Left ventricle myocardium inferior (tissue), 1 donor: ENCODE measurements at regions of chr21 and their contacts with region 1.

Region 1: DNA sequence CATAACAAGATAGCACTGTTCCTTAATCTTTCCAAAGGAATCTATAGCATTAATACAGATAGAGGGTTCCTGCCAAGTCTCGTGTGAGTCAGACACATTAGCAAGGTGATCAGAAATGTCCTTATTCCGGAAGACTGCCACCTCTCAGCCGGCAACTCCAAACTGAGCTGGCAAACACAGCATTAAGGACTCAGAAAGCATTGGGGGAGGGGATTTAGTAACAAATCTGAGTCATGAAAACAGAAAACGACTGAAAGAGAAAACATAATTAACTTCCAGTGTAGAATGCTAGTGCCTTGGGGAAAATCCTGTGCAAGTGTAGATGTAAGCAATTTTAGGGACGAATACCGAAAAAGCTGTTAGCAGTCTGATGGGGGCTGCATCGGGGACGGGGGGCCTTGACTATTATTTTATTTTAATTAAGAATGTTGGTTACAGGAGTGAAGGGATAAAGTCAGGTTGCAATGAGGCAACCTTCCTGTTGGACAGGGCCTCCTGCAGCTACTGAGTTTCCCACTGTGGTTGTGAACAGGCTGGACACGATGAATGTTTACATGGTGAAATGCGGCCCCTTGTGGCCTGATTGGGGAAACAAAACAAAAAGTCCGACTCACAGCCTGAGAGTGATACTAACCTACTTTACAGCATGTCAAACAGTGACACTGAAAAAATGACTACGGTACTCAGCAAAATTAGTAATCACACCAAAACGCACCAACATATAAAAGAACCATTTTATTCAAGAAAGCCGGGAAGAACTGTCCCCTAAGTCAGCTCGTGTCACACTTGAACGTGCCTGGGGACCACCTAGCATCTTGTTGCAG is 20.7 kb downstream of the MIS18A start:
- DNase-seq: peak; percentile 58
- H3K4me3 ChIP-seq: no peak overlapping the region
- H3K27ac ChIP-seq: no peak overlapping the region
- H3K4me1 ChIP-seq: peaks cover 29% of the 10 kb centered on the region
- H3K27me3 ChIP-seq: no peaks in the 10 kb centered on the region
- CTCF ChIP-seq: peak; percentile 76

Region 2: GRCh38 chr21:31426235-31426797 is 831.9 kb before region 1 on chr21:
- intact Hi-C with region 1: no loop called
- DNase-seq: no peak
- H3K4me3 ChIP-seq: no peak overlapping the region
- H3K27ac ChIP-seq: no peak overlapping the region
- H3K4me1 ChIP-seq: no peaks in the 10 kb centered on the region
- H3K27me3 ChIP-seq: peaks cover 3% of the 10 kb centered on the region
- CTCF ChIP-seq: no peak

Region 3: GRCh38 chr21:31781737-31782136 is 476.4 kb before region 1 on chr21:
- intact Hi-C with region 1: loop called (anchors 10 kb)
- DNase-seq: peak; percentile 33
- H3K4me3 ChIP-seq: no peak overlapping the region
- H3K27ac ChIP-seq: no peak overlapping the region
- H3K4me1 ChIP-seq: no peaks in the 10 kb centered on the region
- H3K27me3 ChIP-seq: no peaks in the 10 kb centered on the region
- CTCF ChIP-seq: no peak

Region 4: DNA sequence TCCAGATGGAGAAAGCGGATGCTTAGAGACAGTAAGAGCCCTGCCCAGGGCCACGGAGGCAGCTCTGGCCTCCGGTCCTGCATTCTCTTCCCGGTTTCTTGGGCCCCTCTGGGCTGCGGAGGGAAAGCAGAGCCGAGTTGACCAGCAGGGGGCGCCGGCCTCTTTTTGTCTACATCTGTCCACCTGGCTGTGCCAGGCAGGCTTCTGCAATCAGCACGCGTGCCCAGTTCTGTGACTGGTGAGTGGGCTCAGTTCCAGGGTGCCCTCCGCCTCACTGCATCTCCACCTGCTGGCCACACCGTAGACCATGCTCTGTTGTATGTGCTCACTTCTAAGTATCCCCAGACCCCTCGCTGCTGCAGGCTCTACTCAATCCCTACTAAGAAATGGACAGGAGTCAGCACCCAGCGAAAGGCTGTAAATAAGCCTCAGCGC is 392.1 kb before region 1 on chr21:
- intact Hi-C with region 1: loop called (anchors 5 kb)
- DNase-seq: peak; percentile 88
- H3K4me3 ChIP-seq: no peak overlapping the region
- H3K27ac ChIP-seq: no peak overlapping the region
- H3K4me1 ChIP-seq: peaks cover 10% of the 10 kb centered on the region
- H3K27me3 ChIP-seq: peaks cover 41% of the 10 kb centered on the region
- CTCF ChIP-seq: peak; percentile 93

Region 5: DNA sequence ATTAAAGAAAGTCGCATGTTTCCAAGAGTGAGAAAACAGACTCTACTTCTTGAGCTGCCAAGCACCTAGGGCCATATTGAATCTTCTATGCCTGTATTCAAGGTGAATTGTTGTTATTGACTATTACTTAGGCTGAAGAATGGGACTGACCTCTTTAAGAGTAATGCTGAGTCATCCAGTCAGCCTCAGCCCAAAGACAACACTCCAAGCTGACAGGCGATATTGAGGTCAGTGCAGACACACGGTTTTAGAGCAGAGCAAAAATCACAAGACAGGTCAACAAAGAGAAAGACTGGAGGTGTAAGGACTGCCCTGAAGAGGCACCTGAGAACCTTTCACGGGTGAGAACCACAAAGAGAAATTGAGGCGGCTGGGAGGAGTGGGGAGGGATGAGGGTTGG is 126.2 kb before region 1 on chr21:
- intact Hi-C with region 1: no loop called
- DNase-seq: no peak
- H3K4me3 ChIP-seq: no peak overlapping the region
- H3K27ac ChIP-seq: no peak overlapping the region
- H3K4me1 ChIP-seq: peaks cover 23% of the 10 kb centered on the region
- H3K27me3 ChIP-seq: no peaks in the 10 kb centered on the region
- CTCF ChIP-seq: no peak

Region 6: GRCh38 chr21:32537569-32537881 is 279.4 kb after region 1 on chr21:
- intact Hi-C with region 1: no loop called
- DNase-seq: no peak
- H3K4me3 ChIP-seq: no peak overlapping the region
- H3K27ac ChIP-seq: no peak overlapping the region
- H3K4me1 ChIP-seq: peaks cover 5% of the 10 kb centered on the region
- H3K27me3 ChIP-seq: no peaks in the 10 kb centered on the region
- CTCF ChIP-seq: no peak